Activated CD4-positive, alpha-beta T cell treated with anti-CD3 and anti-CD28 coated beads for 36 hours (primary cell): ENCODE measurements at regions of chr3 and their contacts with region 1.

Region 1: DNA sequence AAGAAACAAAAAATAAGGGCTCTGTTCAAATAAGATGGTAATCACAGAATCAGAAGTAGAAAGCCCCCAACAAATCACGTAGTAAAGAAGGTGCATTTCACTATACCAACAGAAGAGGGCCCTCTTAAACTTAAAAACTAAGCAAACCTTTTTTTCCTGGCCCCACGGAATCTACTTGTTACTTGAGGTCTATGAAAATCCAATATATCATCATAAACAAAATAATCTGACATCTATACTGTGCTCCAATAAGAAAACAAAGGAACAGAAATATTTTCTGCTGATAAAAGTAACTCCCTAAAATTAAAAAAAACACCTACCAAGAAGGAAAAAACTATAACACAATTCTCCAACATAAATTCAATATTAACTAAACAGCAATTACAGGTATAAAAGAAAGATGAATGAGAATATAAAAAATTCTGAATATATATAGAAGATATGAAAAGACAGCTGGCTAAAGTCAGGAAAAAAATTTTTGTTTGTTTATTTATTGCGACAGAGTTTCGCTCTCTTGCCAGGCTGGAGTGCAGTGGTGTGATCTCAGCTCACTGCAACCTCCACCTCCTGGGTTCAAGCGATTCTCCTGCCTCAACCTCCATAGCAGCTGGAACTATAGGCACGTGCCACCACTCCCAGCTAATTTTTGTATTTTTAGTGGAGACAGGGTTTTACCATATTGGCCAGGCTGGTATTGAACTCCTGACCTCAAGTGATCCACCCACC is 81.8 kb downstream of the CLASP2 start:
- DNase-seq: no peak
- ATAC-seq: no peak
- H3K4me3 Mint-ChIP-seq: no peak overlapping the region
- H3K27ac Mint-ChIP-seq: no peak overlapping the region
- H3K4me1 Mint-ChIP-seq: no peaks in the 10 kb centered on the region
- H3K27me3 Mint-ChIP-seq: no peaks in the 10 kb centered on the region

Region 2: DNA sequence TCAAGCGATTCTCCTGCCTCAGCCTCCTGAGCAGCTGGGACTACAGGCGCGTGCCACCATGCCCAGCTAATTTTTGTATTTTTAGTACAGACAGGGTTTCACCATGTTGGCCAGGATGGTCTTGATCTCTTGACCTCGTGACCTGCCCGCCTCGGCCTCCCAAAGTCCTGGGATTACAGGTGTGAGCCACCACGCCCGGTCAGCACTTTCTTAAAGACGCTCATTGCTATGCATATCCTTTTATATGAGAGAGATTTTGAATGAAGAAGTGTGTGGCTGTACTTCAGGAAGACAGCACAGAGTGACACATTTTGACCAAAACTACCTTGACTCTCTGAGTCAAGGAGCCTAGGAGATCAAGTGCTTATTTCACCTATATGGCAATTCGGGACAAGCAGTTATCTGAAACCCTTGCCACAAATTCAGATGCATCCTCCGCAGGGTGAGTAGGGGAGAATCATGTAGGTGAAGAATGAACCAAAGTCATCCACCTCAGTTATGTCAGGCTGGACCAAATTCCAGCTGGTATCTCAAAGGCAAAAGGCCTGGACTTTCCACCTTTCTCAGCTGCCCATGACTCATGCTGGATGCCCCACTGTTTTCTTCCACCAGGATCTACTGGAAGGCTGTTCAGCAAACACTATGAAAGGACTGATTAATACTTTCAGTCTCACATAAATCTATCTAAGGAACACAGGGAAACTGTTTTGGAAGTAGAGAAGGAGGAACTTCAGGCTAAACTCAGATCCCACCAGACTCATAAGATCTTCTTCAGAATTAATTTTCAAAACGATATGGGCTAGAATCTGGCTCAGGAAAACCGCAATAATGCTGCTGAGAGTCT is 449.5 kb before region 1 on chr3:
- CTCF ChIA-PET with region 1: no interaction called
- POLR2A ChIA-PET with region 1: no interaction called
- intact Hi-C with region 1: no loop called
- DNase-seq: no peak
- ATAC-seq: no peak
- H3K4me3 Mint-ChIP-seq: no peak overlapping the region
- H3K27ac Mint-ChIP-seq: no peak overlapping the region
- H3K4me1 Mint-ChIP-seq: no peaks in the 10 kb centered on the region
- H3K27me3 Mint-ChIP-seq: peaks cover 4% of the 10 kb centered on the region

Region 3: GRCh38 chr3:33646406-33646805 is 10.1 kb after region 1 on chr3:
- CTCF ChIA-PET with region 1: interaction called, 17 read pairs
- POLR2A ChIA-PET with region 1: no interaction called
- intact Hi-C with region 1: no loop called
- DNase-seq: no peak
- ATAC-seq: no peak
- H3K4me3 Mint-ChIP-seq: no peak overlapping the region
- H3K27ac Mint-ChIP-seq: no peak overlapping the region
- H3K4me1 Mint-ChIP-seq: peaks cover 19% of the 10 kb centered on the region
- H3K27me3 Mint-ChIP-seq: no peaks in the 10 kb centered on the region

Region 4: GRCh38 chr3:33773637-33774036 is 137.3 kb after region 1 on chr3:
- CTCF ChIA-PET with region 1: interaction called, 24 read pairs
- POLR2A ChIA-PET with region 1: interaction called, 3 read pairs
- intact Hi-C with region 1: loop called (anchors 1 to 2 kb)
- DNase-seq: no peak
- ATAC-seq: no peak
- H3K4me3 Mint-ChIP-seq: no peak overlapping the region
- H3K27ac Mint-ChIP-seq: no peak overlapping the region
- H3K4me1 Mint-ChIP-seq: no peaks in the 10 kb centered on the region
- H3K27me3 Mint-ChIP-seq: no peaks in the 10 kb centered on the region

Region 5: DNA sequence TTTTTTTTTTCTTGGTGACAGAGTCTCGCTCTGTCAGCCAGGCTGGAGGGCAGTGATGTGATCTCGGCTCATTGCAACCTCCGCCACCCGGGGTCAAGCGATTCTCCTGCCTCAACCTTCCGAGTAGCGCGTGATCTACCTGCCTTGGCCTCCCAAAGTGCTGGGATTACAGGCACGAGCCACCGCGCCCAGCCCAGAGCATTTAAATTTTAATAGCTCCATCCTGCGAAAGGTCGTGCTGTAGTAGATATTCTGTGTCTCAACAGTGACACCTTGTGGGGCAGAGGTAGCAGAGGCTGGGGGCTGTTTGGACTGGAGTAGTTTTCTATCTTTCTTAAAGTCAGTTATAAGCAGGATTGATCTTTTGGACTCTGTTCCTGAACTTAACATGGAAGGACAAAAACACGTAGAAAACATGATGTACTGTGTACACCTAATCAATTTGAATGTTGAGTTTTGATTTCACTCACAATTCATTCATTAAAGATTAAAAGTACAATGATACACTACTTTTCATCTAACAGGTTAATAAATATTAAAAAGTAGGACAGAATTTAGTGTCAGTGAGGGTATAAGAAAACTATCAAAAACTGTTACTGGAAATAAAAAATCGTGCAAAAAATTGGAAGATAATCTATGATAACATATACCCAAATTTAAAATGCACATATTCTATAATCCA is 151.2 kb after region 1 on chr3:
- CTCF ChIA-PET with region 1: interaction called, 31 read pairs
- POLR2A ChIA-PET with region 1: no interaction called
- intact Hi-C with region 1: loop called (anchors 1 kb)
- DNase-seq: peak; percentile 72
- ATAC-seq: peak; percentile 87
- H3K4me3 Mint-ChIP-seq: peak overlapping the region; percentile 36
- H3K27ac Mint-ChIP-seq: no peak overlapping the region
- H3K4me1 Mint-ChIP-seq: peaks cover 7% of the 10 kb centered on the region
- H3K27me3 Mint-ChIP-seq: peaks cover 6% of the 10 kb centered on the region